SK-N-SH (cell line): ENCODE measurements at regions of chr21 and their contacts with region 1.

Region 1: DNA sequence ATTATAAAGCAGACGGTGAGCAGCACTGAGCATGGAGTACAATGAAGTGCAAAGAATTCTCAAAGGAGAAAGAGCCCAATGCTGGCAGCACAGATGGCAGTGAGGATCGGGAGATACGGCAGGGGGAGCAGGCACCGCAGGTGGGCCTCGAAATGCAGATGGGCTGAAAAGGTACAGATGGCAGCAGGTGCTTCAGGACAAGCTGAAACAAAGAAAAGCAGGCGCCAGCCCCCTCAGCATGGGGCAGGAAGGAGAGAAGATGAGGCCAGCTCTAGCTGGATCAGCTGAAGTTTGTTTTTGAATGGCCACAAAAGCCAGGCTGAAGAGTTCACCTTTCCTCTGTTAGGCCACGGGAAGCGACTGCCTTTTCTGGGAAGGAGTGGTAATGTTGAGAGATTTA is 7.7 kb downstream of the CFAP298 start:
- DNase-seq: no peak
- H3K4me3 ChIP-seq: no peak overlapping the region
- H3K27ac ChIP-seq: no peak overlapping the region
- H3K4me1 ChIP-seq: no peaks in the 10 kb centered on the region
- H3K27me3 ChIP-seq: no peaks in the 10 kb centered on the region
- CTCF ChIP-seq: no peak
- EP300 ChIP-seq: no peak
- RAD21 ChIP-seq: no peak

Region 2: GRCh38 chr21:32392880-32393676 is 211.4 kb before region 1 on chr21 and contains the start of gene URB1:
- CTCF ChIA-PET with region 1: interaction called, 38 read pairs
- POLR2A ChIA-PET with region 1: no interaction called
- DNase-seq: peak; percentile 98
- H3K4me3 ChIP-seq: peak within 1 kb of the TSS; percentile 98 to 99
- H3K27ac ChIP-seq: peak within 1 kb of the TSS; percentile 73 to 88; a peak in 3 of 4 replicates
- H3K4me1 ChIP-seq: peaks cover 5 to 32% of the 10 kb centered on the region in 2 experiments; a peak in 3 of 4 replicates
- H3K27me3 ChIP-seq: no peaks in the 10 kb centered on the region
- CTCF ChIP-seq: peak; percentile 12; the same call in 1 of the 2 replicates
- EP300 ChIP-seq: no peak
- RAD21 ChIP-seq: no peak
- polyA plus RNA-seq, gene URB1: 9.9 and 12.5 TPM in 2 replicates

Region 3: GRCh38 chr21:32412162-32413014 is 192.1 kb before region 1 on chr21 and contains the start of gene EVA1C:
- CTCF ChIA-PET with region 1: interaction called, 151 read pairs
- POLR2A ChIA-PET with region 1: no interaction called
- DNase-seq: peak; percentile 82
- H3K4me3 ChIP-seq: peak within 1 kb of the TSS; percentile 63 to 72
- H3K27ac ChIP-seq: peak within 1 kb of the TSS in 1 of 2 experiments; percentile 81; a peak in 2 of 4 replicates
- H3K4me1 ChIP-seq: peaks cover 13% of the 10 kb centered on the region in 2 experiments; a peak in 3 of 4 replicates
- H3K27me3 ChIP-seq: no peaks in the 10 kb centered on the region
- CTCF ChIP-seq: no peak; the same call in 1 of the 2 replicates
- EP300 ChIP-seq: no peak
- RAD21 ChIP-seq: no peak
- polyA plus RNA-seq, gene EVA1C: 9.5 and 10.1 TPM in 2 replicates

Region 4: GRCh38 chr21:32590130-32590529 is 14.3 kb before region 1 on chr21:
- CTCF ChIA-PET with region 1: interaction called, 24 read pairs
- POLR2A ChIA-PET with region 1: no interaction called
- DNase-seq: no peak
- H3K4me3 ChIP-seq: no peak overlapping the region
- H3K27ac ChIP-seq: no peak overlapping the region
- H3K4me1 ChIP-seq: no peaks in the 10 kb centered on the region; a peak in 1 of 4 replicates
- H3K27me3 ChIP-seq: no peaks in the 10 kb centered on the region
- CTCF ChIP-seq: no peak
- EP300 ChIP-seq: no peak
- RAD21 ChIP-seq: no peak

Region 5: DNA sequence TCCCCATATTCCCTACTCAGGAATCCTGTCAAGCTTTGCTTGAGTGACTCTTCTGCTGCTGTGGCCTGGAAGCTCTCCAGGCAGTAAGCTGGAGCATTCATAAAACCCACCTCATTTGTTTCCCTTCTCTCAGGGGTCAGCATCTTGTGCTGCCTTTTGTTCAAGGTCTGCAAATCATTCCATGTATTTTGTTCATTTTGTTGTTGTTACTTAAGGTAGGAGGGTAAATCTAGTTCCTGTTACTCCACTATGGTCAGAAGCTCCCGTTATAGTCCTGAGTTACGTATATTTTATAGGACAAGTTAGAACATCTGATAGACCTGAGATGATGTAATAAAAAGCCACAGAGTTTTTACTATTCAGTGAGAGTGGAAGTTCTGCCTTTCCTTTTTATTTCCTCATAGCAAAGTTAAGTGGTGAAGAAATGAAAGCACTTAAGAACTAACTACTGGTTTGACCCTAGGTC is 113.4 kb after region 1 on chr21:
- CTCF ChIA-PET with region 1: no interaction called
- POLR2A ChIA-PET with region 1: no interaction called
- DNase-seq: no peak
- H3K4me3 ChIP-seq: no peak overlapping the region
- H3K27ac ChIP-seq: no peak overlapping the region
- H3K4me1 ChIP-seq: no peaks in the 10 kb centered on the region; a peak in 1 of 4 replicates
- H3K27me3 ChIP-seq: no peaks in the 10 kb centered on the region
- CTCF ChIP-seq: no peak
- EP300 ChIP-seq: no peak
- RAD21 ChIP-seq: no peak